ENCODE measurements at regions of chr12 and their contacts with region 1.

Region 1: GRCh38 chr12:69359531-69360347 is at the start of gene YEATS4:
- DNase-seq: peak; percentile 67
- H3K4me3 ChIP-seq: peak within 1 kb of the TSS; percentile 85
- H3K27ac ChIP-seq: peak within 1 kb of the TSS; percentile 95
- H3K27me3 ChIP-seq: no peaks in the 10 kb centered on the region
- CTCF ChIP-seq: no peak
- polyA plus RNA-seq, gene YEATS4: 8.1 and 13.0 TPM in 2 replicates

Region 2: DNA sequence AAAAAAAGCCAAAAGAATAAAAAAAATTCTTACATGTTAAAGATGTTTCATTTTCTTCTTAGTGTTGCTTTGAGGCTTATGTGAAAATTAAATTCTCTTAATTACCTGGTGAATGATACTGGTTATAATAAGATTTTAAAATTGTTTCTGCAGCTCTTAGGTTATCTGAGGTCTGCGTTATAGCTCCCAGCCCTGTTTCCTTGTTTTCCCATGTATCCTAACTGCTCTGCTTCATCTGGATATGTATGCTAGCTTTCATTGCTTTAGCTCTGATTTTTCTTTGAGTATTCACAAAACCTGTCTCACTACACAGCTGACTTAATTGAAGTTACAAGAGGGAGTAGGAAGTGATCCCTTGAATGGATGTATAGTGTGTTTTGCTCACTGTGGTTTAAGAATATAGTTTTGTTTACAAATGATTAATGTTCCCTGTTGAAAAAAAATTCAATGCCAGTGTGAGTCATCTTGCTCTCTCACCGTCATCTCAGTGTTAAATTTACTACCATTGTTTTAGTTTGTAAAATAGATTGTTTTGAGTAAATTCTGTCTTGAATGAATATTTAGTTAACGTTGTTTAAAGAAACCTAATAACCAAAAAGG is 93.6 kb before region 1 on chr12:
- CTCF ChIA-PET with region 1: interaction called, 19 read pairs
- POLR2A ChIA-PET with region 1: no interaction called
- DNase-seq: peak; percentile 34
- H3K4me3 ChIP-seq: no peak overlapping the region
- H3K27ac ChIP-seq: no peak overlapping the region
- H3K27me3 ChIP-seq: no peaks in the 10 kb centered on the region
- CTCF ChIP-seq: no peak

Region 3: GRCh38 chr12:69388371-69388770 is 28.6 kb after region 1 on chr12:
- CTCF ChIA-PET with region 1: interaction called, 14 read pairs
- POLR2A ChIA-PET with region 1: no interaction called
- DNase-seq: peak; percentile 50
- H3K4me3 ChIP-seq: no peak overlapping the region
- H3K27ac ChIP-seq: no peak overlapping the region
- H3K27me3 ChIP-seq: no peaks in the 10 kb centered on the region
- CTCF ChIP-seq: peak; percentile 73

Region 4: GRCh38 chr12:69570545-69571399 is 211.0 kb after region 1 on chr12:
- CTCF ChIA-PET with region 1: interaction called, 53 read pairs
- POLR2A ChIA-PET with region 1: no interaction called
- DNase-seq: no peak
- H3K4me3 ChIP-seq: no peak overlapping the region
- H3K27ac ChIP-seq: peak overlapping the region; percentile 58
- H3K27me3 ChIP-seq: no peaks in the 10 kb centered on the region
- CTCF ChIP-seq: peak; percentile 82

Region 5: DNA sequence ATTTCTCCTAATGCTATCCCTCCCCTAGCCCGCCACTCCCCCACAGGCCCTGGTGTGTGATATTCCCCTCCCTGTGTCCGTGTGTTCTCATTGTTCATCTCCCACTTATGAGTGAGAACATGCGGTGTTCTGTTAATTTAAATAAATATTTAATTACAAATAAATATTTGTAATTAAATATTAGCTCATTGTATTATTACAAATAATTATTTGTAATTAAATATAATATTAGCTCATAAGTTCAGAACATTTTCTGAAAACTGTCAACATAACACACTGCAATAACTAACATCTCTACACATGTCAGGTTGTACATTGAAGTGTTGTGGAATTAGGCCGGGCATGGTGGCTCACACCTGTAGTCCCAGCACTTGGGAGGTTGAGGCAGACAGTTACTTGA is 384.4 kb after region 1 on chr12:
- CTCF ChIA-PET with region 1: interaction called, 10 read pairs
- POLR2A ChIA-PET with region 1: no interaction called
- DNase-seq: no peak
- H3K4me3 ChIP-seq: no peak overlapping the region
- H3K27ac ChIP-seq: no peak overlapping the region
- H3K27me3 ChIP-seq: peaks cover 29% of the 10 kb centered on the region
- CTCF ChIP-seq: no peak